Pancreas (tissue), 10 donors: ENCODE measurements at regions of chr16 and their contacts with region 1.

Region 1: GRCh38 chr16:85420501-85421337 is 192.4 kb upstream of the GSE1 start:
- DNase-seq: peak; percentile 31 to 92 (median 76)
- ATAC-seq: peak; percentile 27 to 47 (median 41)
- H3K4me3 ChIP-seq: no peak overlapping the region
- H3K27ac ChIP-seq: no peak overlapping the region
- H3K4me1 ChIP-seq: peaks cover 19 to 31% (median 29%) of the 10 kb centered on the region in 3 donors
- H3K27me3 ChIP-seq: no peaks in the 10 kb centered on the region
- CTCF ChIP-seq: peak; percentile 100

Region 2: DNA sequence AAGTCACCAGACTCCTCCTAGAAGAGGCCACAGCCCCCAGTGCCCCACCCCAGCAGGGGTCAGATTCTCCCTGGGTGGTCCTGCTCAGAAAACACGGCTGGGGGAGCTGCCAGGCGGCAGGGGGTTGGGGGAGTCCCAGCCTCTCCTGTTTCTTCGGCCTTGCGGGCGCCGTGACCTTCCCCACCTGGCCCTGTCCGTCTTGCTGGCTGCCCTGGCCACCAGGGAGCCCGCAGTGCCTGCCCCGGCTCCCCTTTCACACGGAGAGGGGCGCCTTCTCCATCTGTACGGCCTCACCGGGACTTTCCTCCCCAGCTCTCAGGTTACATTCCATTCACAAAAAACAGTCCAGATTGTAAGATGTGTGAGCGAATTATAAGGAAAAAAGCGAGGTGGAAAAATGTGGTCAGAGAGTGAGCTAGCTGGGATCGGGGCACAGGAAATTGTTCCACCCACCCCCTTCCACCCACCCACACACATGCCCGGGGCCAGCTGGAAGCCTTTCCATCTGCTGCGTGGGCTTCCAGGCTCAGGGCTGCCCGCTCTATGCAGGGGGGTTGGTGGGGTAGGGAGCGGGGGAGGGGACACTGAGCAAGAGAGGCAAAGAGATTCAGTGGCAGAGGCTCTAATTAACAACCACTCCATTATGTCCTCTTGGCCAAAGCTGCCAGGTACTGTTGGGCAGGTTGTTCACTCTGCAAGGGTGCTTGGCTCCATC is 293.9 kb before region 1 on chr16:
- intact Hi-C with region 1: no loop called
- DNase-seq: no peak
- ATAC-seq: peak; percentile 27 to 75 (median 58)
- H3K4me3 ChIP-seq: no peak overlapping the region
- H3K27ac ChIP-seq: peak overlapping the region in 3 of 4 donors; percentile 42 to 75 (median 63)
- H3K4me1 ChIP-seq: peaks cover 0 to 7% (median 0%) of the 10 kb centered on the region in 3 donors
- H3K27me3 ChIP-seq: no peaks in the 10 kb centered on the region
- CTCF ChIP-seq: no peak

Region 3: GRCh38 chr16:85202631-85203461 is 217.9 kb before region 1 on chr16:
- intact Hi-C with region 1: no loop called
- DNase-seq: peak; percentile 79 to 96 (median 94)
- ATAC-seq: peak; percentile 82 to 90 (median 84)
- H3K4me3 ChIP-seq: no peak overlapping the region
- H3K27ac ChIP-seq: peak overlapping the region; percentile 74 to 82 (median 78)
- H3K4me1 ChIP-seq: peaks cover 25 to 42% (median 32%) of the 10 kb centered on the region in 3 donors
- H3K27me3 ChIP-seq: no peaks in the 10 kb centered on the region
- CTCF ChIP-seq: no peak

Region 4: GRCh38 chr16:85316321-85316919 is 104.3 kb before region 1 on chr16:
- intact Hi-C with region 1: loop called in 1 of 3 experiments (anchors 10 kb)
- DNase-seq: peak; percentile 74 to 91 (median 84)
- ATAC-seq: peak; percentile 76 to 86 (median 84)
- H3K4me3 ChIP-seq: no peak overlapping the region
- H3K27ac ChIP-seq: peak overlapping the region in 3 of 4 donors; percentile 71 to 90 (median 77)
- H3K4me1 ChIP-seq: peaks cover 27 to 31% (median 27%) of the 10 kb centered on the region in 3 donors
- H3K27me3 ChIP-seq: no peaks in the 10 kb centered on the region
- CTCF ChIP-seq: peak; percentile 84 to 94 (median 91)

Region 5: DNA sequence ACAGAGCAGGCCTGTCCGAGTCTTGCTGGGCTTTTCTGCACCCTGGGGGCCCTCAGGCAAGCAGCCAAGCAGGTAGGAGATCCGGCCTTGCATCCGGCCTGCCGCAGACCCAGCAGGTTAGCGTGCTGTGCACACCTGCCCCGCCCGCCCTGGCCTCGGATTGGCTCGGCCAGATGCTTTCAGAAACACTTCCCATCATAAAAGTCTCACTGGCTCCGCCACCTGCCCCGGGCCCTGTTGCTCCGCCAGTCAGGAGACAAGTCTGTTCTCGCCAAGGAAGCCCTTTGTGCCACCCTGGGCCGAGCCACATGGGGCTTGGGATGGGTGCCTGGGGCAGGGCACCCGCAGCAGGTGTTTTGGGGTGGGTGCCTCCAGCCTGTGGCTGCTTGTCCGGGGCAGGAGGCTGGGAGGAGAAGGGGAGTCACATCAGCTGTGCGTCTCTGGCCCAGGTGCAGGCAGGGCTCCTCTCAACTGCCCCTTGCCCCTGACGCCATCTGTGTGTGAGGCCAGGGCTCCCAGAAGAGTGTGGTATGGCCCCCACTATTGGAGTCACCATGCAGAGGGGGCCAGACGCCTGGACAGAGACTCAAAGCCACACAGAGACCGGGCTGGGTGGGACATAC is 35.8 kb before region 1 on chr16:
- intact Hi-C with region 1: no loop called
- DNase-seq: peak in 3 of 6 donors; percentile 11 to 62 (median 27)
- ATAC-seq: no peak
- H3K4me3 ChIP-seq: no peak overlapping the region
- H3K27ac ChIP-seq: no peak overlapping the region
- H3K4me1 ChIP-seq: no peaks in the 10 kb centered on the region
- H3K27me3 ChIP-seq: no peaks in the 10 kb centered on the region
- CTCF ChIP-seq: no peak

Region 6: DNA sequence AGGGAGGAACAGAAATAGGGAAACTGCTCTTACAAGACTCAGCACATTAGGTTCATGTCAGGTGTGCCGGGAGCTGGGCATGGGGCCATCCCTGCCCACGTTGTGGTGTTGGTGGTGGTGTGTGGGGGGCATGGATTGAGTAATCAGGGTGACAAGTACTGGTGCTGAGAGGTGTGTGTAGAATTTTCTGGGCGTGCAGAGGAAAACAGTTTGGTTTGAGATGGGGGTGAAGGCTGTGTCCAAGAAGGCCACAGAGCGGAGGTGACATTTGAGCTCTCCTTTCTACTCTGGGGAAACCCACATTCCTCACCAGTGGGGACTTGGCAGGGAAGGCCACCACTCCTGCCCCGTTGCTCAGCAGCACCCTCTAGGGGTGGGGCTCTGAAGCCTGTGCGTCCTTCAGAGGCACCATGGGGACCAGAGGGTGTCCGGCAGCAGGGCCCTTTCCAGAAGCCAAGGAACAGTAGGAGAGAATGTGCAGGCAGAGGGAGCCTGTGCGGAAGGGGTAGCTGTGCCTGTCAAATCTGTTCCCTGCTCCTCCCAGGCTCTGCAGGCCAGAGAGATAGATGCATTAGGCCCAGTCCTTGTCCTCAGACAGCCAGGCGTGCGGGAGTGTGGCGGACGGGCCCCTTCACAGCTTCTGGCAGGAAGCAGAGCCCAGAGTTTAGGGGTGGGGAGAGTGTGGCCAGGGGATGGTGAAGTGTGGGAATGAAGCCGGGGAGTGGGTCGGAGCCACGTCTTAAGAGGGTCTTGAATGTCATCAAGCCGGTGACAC is 143.7 kb after region 1 on chr16:
- intact Hi-C with region 1: loop called in 1 of 3 experiments (anchors 5 kb)
- DNase-seq: peak in 2 of 6 donors; percentile 39 to 74
- ATAC-seq: peak in 3 of 4 donors; percentile 13 to 46 (median 34)
- H3K4me3 ChIP-seq: no peak overlapping the region
- H3K27ac ChIP-seq: no peak overlapping the region
- H3K4me1 ChIP-seq: peaks cover 0 to 27% (median 6%) of the 10 kb centered on the region in 3 donors
- H3K27me3 ChIP-seq: no peaks in the 10 kb centered on the region
- CTCF ChIP-seq: peak; percentile 23 to 43 (median 27)

Region 7: DNA sequence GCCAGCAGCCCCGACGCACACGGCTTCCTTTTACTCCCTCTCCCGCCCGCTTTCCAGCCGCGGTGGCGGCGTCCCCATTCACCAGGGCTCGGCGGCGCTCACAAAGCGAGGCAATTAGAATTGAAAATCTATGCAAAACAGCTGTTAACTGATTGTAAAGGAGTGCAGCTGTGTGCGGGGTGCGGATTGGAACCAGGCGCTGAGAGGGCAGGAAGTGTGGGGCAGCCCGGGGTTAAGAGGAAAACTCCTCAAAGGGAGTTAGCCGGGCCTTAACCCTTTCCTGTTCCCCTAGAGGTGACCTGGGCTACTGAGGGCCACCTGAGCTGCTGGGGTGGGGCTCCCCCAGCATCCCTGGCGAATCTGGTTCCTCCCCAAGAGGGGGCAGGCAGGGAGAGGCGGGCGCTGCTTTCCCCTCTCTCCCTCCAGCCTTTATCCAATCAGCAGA is 186.6 kb after region 1 on chr16:
- intact Hi-C with region 1: loop called in 1 of 3 experiments (anchors 5 kb)
- DNase-seq: peak in 1 of 6 donors; percentile 18
- ATAC-seq: no peak
- H3K4me3 ChIP-seq: no peak overlapping the region
- H3K27ac ChIP-seq: peak overlapping the region in 3 of 4 donors; percentile 22 to 72 (median 30)
- H3K4me1 ChIP-seq: peaks cover 33 to 62% (median 50%) of the 10 kb centered on the region in 3 donors
- H3K27me3 ChIP-seq: no peaks in the 10 kb centered on the region
- CTCF ChIP-seq: no peak